ENCODE measurements at regions of chr12 and their contacts with region 1.

Region 1: GRCh38 chr12:117119592-117120198 is 20.5 kb upstream of the TESC start:
- DNase-seq: peak; percentile 73
- ATAC-seq: peak; percentile 82
- H3K4me3 ChIP-seq: no peak overlapping the region
- H3K27ac ChIP-seq: no peak overlapping the region
- H3K4me1 ChIP-seq: peaks cover 4% of the 10 kb centered on the region
- H3K27me3 ChIP-seq: no peaks in the 10 kb centered on the region
- CTCF ChIP-seq: peak; percentile 97

Region 2: DNA sequence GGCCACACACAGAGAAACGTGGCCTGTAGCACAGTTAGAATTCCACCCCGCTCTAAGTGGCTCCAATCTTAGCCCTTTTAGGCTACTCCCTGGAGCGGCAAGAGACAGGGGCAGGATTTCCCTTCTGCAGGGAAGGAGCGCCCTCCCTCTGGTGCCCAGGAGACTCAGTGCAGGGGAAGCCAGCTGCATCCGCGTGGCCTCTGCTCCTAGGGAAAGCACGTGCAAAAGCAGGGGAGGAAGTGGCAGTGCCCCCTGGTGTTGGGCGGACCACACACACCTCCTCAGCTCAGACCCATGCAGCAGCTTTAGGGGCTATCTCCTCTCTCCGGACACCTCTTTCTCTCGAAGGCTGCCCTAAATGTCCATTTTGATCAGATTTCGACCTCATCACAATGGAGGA is 431.8 kb before region 1 on chr12:
- CTCF ChIA-PET with region 1: no interaction called
- POLR2A ChIA-PET with region 1: interaction called, 22 read pairs
- intact Hi-C with region 1: no loop called
- DNase-seq: peak; percentile 42
- ATAC-seq: peak; percentile 77
- H3K4me3 ChIP-seq: no peak overlapping the region
- H3K27ac ChIP-seq: no peak overlapping the region
- H3K4me1 ChIP-seq: no peaks in the 10 kb centered on the region
- H3K27me3 ChIP-seq: no peaks in the 10 kb centered on the region
- CTCF ChIP-seq: peak; percentile 69

Region 3: GRCh38 chr12:116703214-116703795 is 416.4 kb before region 1 on chr12:
- CTCF ChIA-PET with region 1: no interaction called
- POLR2A ChIA-PET with region 1: no interaction called
- intact Hi-C with region 1: loop called (anchors 1 kb)
- DNase-seq: peak; percentile 88
- ATAC-seq: peak; percentile 91
- H3K4me3 ChIP-seq: no peak overlapping the region
- H3K27ac ChIP-seq: no peak overlapping the region
- H3K4me1 ChIP-seq: peaks cover 7% of the 10 kb centered on the region
- H3K27me3 ChIP-seq: no peaks in the 10 kb centered on the region
- CTCF ChIP-seq: peak; percentile 91

Region 4: GRCh38 chr12:116718655-116719454 is 400.8 kb before region 1 on chr12:
- CTCF ChIA-PET with region 1: no interaction called
- POLR2A ChIA-PET with region 1: interaction called, 10 read pairs
- intact Hi-C with region 1: no loop called
- DNase-seq: peak; percentile 60
- ATAC-seq: peak; percentile 81
- H3K4me3 ChIP-seq: no peak overlapping the region
- H3K27ac ChIP-seq: no peak overlapping the region
- H3K4me1 ChIP-seq: peaks cover 15% of the 10 kb centered on the region
- H3K27me3 ChIP-seq: no peaks in the 10 kb centered on the region
- CTCF ChIP-seq: no peak

Region 5: GRCh38 chr12:117025481-117026151 is 94.1 kb before region 1 on chr12:
- CTCF ChIA-PET with region 1: no interaction called
- POLR2A ChIA-PET with region 1: no interaction called
- intact Hi-C with region 1: loop called (anchors 1 kb)
- DNase-seq: peak; percentile 82
- ATAC-seq: peak; percentile 92
- H3K4me3 ChIP-seq: no peak overlapping the region
- H3K27ac ChIP-seq: no peak overlapping the region
- H3K4me1 ChIP-seq: no peaks in the 10 kb centered on the region
- H3K27me3 ChIP-seq: no peaks in the 10 kb centered on the region
- CTCF ChIP-seq: peak; percentile 98

Measured in PC-3 (cell line).